SK-N-SH (cell line): ENCODE measurements at regions of chr20 and their contacts with region 1.

Region 1: GRCh38 chr20:36808317-36809257 is 35.0 kb upstream of the DSN1 start:
- DNase-seq: peak; percentile 81
- H3K4me3 ChIP-seq: no peak overlapping the region
- H3K27ac ChIP-seq: no peak overlapping the region
- H3K4me1 ChIP-seq: no peaks in the 10 kb centered on the region
- H3K27me3 ChIP-seq: no peaks in the 10 kb centered on the region
- CTCF ChIP-seq: peak; percentile 81
- EP300 ChIP-seq: no peak
- RAD21 ChIP-seq: no peak; the same call in 1 of the 2 replicates

Region 2: DNA sequence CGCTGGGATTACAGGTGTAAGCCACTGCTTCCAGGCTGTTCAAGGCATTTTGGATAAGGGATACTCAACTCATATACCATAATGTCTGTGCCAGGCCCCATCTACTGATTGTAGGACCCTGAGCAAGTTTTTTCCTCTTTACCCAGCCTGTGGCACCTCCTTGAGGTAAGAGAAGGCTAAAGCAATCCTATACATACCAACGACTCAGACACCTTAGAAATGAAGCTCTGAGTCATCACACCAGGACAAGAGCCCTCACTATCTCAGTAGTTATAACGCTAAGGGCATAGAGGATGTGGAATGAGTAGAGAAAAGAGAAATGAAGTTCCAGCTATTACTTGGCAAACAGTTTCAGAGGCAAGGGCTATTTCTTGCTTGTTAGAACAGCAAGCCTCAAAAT is 79.6 kb before region 1 on chr20:
- CTCF ChIA-PET with region 1: no interaction called
- POLR2A ChIA-PET with region 1: no interaction called
- DNase-seq: no peak
- H3K4me3 ChIP-seq: no peak overlapping the region
- H3K27ac ChIP-seq: no peak overlapping the region
- H3K4me1 ChIP-seq: peaks cover 2 to 4% of the 10 kb centered on the region in 2 experiments; a peak in 1 of 4 replicates
- H3K27me3 ChIP-seq: no peaks in the 10 kb centered on the region
- CTCF ChIP-seq: peak; percentile 41
- EP300 ChIP-seq: no peak
- RAD21 ChIP-seq: peak; percentile 41

Region 3: GRCh38 chr20:36786246-36786645 is 22.3 kb before region 1 on chr20:
- CTCF ChIA-PET with region 1: interaction called, 10 read pairs
- POLR2A ChIA-PET with region 1: no interaction called
- DNase-seq: no peak
- H3K4me3 ChIP-seq: no peak overlapping the region
- H3K27ac ChIP-seq: no peak overlapping the region
- H3K4me1 ChIP-seq: no peaks in the 10 kb centered on the region
- H3K27me3 ChIP-seq: no peaks in the 10 kb centered on the region
- CTCF ChIP-seq: no peak
- EP300 ChIP-seq: no peak
- RAD21 ChIP-seq: no peak

Region 4: GRCh38 chr20:36793294-36794115 is 15.1 kb before region 1 on chr20:
- CTCF ChIA-PET with region 1: interaction called, 31 read pairs
- POLR2A ChIA-PET with region 1: no interaction called
- DNase-seq: no peak
- H3K4me3 ChIP-seq: no peak overlapping the region
- H3K27ac ChIP-seq: no peak overlapping the region
- H3K4me1 ChIP-seq: no peaks in the 10 kb centered on the region
- H3K27me3 ChIP-seq: no peaks in the 10 kb centered on the region
- CTCF ChIP-seq: no peak
- EP300 ChIP-seq: no peak
- RAD21 ChIP-seq: no peak